ENCODE measurements at regions of chr5 and their contacts with region 1.

Region 1: GRCh38 chr5:14240359-14240758 is 97.2 kb downstream of the TRIO start:
- DNase-seq: no peak
- H3K4me3 ChIP-seq: no peak overlapping the region
- H3K27ac ChIP-seq: no peak overlapping the region
- H3K4me1 ChIP-seq: peaks cover 22% of the 10 kb centered on the region
- H3K27me3 ChIP-seq: no peaks in the 10 kb centered on the region
- CTCF ChIP-seq: no peak
- POLR2A ChIP-seq: no peak

Region 2: GRCh38 chr5:14258840-14259239 is 18.5 kb after region 1 on chr5:
- CTCF ChIA-PET with region 1: interaction called, 3 read pairs
- POLR2A ChIA-PET with region 1: no interaction called
- dilution Hi-C with region 1: no loop called
- intact Hi-C with region 1: loop called (anchors 2 kb)
- DNase-seq: peak; percentile 60
- H3K4me3 ChIP-seq: no peak overlapping the region
- H3K27ac ChIP-seq: peak overlapping the region; percentile 38
- H3K4me1 ChIP-seq: peaks cover 50% of the 10 kb centered on the region
- H3K27me3 ChIP-seq: no peaks in the 10 kb centered on the region
- CTCF ChIP-seq: peak; percentile 7 to 25
- POLR2A ChIP-seq: no peak

Region 3: GRCh38 chr5:14834584-14835550 is 594.5 kb after region 1 on chr5:
- CTCF ChIA-PET with region 1: no interaction called
- POLR2A ChIA-PET with region 1: no interaction called
- dilution Hi-C with region 1: no loop called
- intact Hi-C with region 1: no loop called
- DNase-seq: no peak
- H3K4me3 ChIP-seq: no peak overlapping the region
- H3K27ac ChIP-seq: no peak overlapping the region
- H3K4me1 ChIP-seq: no peaks in the 10 kb centered on the region
- H3K27me3 ChIP-seq: no peaks in the 10 kb centered on the region
- CTCF ChIP-seq: no peak
- POLR2A ChIP-seq: no peak